ENCODE measurements at regions of chr1 and their contacts with region 1.

Region 1: DNA sequence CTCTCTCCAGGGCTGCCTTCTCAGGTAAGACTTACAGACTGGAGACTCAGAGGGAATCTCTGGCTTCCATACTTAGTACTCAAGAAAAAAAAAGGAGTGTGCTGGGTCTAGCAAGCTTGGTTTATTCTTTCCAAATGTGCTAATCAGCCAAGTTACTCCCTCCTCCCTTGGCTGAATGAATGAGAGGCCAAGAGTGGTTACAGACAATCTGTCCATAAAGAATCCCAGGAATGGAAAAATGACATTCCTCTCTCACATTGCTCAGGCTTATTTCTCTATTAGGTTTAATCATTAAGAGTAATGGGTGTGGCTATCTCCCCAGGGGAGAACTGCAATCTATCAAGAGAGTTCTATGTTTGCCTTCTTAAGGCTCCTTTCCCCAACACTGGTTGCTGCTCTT is 547.3 kb upstream of the PLXNA2 start:
- DNase-seq: no peak
- ATAC-seq: no peak
- H3K4me3 Mint-ChIP-seq: no peak overlapping the region
- H3K27ac Mint-ChIP-seq: no peak overlapping the region
- H3K4me1 Mint-ChIP-seq: no peaks in the 10 kb centered on the region
- H3K27me3 Mint-ChIP-seq: peaks cover 4% of the 10 kb centered on the region

Region 2: DNA sequence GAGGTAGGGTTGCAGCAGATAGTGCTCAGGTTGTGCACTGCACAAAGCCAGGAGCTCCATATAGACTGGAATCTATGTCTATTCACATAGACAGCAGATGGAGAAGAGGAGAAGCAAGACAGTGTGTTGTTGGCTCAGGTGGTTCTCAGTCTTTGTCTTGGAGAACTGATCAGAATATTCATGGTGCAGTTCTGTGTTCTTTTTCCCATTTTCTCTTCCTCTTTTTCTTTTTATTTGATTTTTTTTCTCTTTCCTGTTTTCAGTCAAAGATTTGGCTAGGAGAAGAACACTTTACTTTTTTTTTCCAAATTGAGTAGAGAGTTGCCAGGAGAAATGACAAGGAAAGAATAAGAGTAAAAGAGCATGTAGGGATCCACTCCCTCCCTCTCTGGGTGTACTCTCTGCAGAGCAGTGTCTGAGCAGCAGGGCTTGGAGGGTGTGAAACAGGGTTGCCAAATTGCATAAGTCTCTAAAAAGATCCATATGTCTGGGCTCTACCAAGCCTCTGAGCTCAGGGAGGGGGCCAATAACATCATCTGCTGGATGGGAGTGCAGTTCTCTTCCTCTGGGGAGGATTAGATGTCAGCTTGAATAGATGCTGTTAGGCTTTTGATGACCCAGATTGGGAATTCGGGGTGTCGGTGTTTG is 871.8 kb before region 1 on chr1:
- CTCF ChIA-PET with region 1: no interaction called
- POLR2A ChIA-PET with region 1: no interaction called
- intact Hi-C with region 1: no loop called
- DNase-seq: no peak
- ATAC-seq: no peak
- H3K4me3 Mint-ChIP-seq: no peak overlapping the region
- H3K27ac Mint-ChIP-seq: no peak overlapping the region
- H3K4me1 Mint-ChIP-seq: no peaks in the 10 kb centered on the region
- H3K27me3 Mint-ChIP-seq: peaks cover 12% of the 10 kb centered on the region

Region 3: GRCh38 chr1:208604295-208604694 is 187.2 kb before region 1 on chr1:
- CTCF ChIA-PET with region 1: no interaction called
- POLR2A ChIA-PET with region 1: interaction called, 13 read pairs
- intact Hi-C with region 1: no loop called
- DNase-seq: peak; percentile 16
- ATAC-seq: peak; percentile 95
- H3K4me3 Mint-ChIP-seq: no peak overlapping the region
- H3K27ac Mint-ChIP-seq: no peak overlapping the region
- H3K4me1 Mint-ChIP-seq: peaks cover 12% of the 10 kb centered on the region
- H3K27me3 Mint-ChIP-seq: peaks cover 5% of the 10 kb centered on the region

Region 4: GRCh38 chr1:208864366-208864965 is 73.0 kb after region 1 on chr1:
- CTCF ChIA-PET with region 1: no interaction called
- POLR2A ChIA-PET with region 1: no interaction called
- intact Hi-C with region 1: no loop called
- DNase-seq: no peak
- ATAC-seq: no peak
- H3K4me3 Mint-ChIP-seq: no peak overlapping the region
- H3K27ac Mint-ChIP-seq: no peak overlapping the region
- H3K4me1 Mint-ChIP-seq: no peaks in the 10 kb centered on the region
- H3K27me3 Mint-ChIP-seq: peaks cover 3% of the 10 kb centered on the region